MCF 10A (cell line): ENCODE measurements at regions of chr20 and their contacts with region 1.

Region 1: DNA sequence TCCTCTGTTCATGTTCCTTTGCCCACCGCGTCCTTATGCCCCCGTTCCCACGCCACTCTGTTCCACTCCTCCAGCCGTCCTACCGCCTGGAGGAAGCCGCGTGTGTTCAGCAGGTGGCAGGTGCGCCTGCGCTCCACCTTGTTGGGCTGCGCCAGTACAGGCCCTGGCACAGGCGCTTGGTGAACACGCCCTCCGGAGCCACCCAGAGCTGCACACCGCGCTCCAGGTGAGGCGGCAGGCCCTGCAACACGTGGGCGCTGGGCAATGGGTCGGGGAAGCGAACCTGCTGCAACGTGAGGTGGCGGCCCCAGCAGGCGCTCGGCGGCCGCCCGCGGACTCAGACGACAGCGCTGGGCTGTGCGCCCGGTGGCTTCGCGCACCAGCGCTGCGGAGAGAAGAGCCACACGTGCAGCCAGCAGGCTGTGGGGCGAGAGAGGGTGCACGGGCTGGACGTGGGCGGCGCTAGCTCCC is 4.1 kb upstream of the FOXS1 start:
- DNase-seq: no peak
- H3K4me3 Mint-ChIP-seq: no peak overlapping the region
- H3K27ac Mint-ChIP-seq: no peak overlapping the region
- H3K4me1 Mint-ChIP-seq: no peaks in the 10 kb centered on the region
- H3K27me3 Mint-ChIP-seq: peaks cover 33% of the 10 kb centered on the region
- CTCF ChIP-seq: no peak

Region 2: DNA sequence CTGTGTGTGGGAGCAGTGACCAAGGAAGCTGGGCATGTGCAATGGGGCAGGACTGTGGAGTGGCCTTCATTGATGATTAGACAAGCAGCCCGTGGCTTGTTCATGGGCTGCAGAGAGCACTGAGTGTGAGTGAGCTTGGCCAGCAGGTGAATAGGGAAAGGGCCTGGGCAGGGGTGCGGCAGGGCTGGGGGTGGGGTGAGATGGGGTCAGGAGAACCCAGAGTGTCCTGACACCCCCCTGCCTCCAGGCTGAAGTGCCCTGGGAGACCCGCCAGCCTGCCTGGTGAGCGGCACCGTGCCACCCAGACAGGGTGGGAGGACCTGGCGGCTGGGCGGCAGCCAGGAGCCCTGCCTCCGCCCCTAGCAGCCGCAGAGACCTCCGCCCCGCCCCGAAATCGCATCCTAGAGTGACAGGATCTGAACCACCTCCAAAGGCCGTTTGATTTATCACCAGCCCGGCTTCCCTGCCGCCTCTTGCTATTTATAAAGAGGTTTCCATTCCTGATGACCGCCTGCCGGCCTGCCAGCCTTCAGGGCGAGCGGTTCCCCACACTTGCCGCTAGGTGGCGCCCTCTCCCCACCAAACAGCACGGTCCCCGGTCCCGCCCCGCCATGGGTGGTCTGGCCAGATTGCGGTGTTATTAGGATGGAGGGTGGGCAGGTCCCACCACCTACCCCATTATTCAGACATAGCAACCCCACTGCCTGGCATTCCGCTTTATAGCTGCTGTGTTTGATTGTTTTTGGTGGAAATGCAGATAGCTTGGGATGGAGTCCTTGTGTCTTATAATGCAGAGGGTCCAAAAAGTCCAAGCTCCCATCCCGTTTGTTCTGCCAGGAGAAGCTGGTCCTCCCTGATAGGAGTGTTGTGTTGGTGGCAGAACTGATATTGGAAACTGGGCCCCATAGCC is 26.8 kb before region 1 on chr20:
- CTCF ChIA-PET with region 1: interaction called, 34 read pairs
- POLR2A ChIA-PET with region 1: no interaction called
- intact Hi-C with region 1: loop called (anchors 1 kb)
- DNase-seq: peak; percentile 70
- H3K4me3 Mint-ChIP-seq: no peak overlapping the region
- H3K27ac Mint-ChIP-seq: no peak overlapping the region
- H3K4me1 Mint-ChIP-seq: no peaks in the 10 kb centered on the region
- H3K27me3 Mint-ChIP-seq: no peaks in the 10 kb centered on the region
- CTCF ChIP-seq: peak; percentile 99

Region 3: DNA sequence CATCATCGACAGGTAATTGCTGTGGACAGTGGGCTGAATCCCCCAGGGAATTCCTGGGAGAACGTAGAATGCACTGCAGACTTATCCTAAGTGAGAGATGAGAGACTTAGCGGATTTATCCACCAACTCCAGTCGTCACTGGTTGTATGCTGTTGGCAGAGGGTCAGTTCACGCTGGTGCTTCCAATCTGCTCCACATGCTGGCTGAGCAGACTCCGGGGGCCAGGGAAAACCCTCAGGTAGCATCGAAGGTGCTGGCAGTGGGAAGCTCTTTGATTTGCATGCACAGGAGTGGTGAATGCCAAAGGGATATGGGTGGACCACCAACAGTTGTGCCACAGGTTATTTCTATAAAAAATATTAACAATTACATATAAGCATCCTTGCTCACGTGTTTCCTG is 41.2 kb after region 1 on chr20:
- CTCF ChIA-PET with region 1: interaction called, 13 read pairs
- POLR2A ChIA-PET with region 1: no interaction called
- intact Hi-C with region 1: no loop called
- DNase-seq: no peak
- H3K4me3 Mint-ChIP-seq: no peak overlapping the region
- H3K27ac Mint-ChIP-seq: no peak overlapping the region
- H3K4me1 Mint-ChIP-seq: peaks cover 5% of the 10 kb centered on the region
- H3K27me3 Mint-ChIP-seq: peaks cover 66% of the 10 kb centered on the region
- CTCF ChIP-seq: no peak

Region 4: DNA sequence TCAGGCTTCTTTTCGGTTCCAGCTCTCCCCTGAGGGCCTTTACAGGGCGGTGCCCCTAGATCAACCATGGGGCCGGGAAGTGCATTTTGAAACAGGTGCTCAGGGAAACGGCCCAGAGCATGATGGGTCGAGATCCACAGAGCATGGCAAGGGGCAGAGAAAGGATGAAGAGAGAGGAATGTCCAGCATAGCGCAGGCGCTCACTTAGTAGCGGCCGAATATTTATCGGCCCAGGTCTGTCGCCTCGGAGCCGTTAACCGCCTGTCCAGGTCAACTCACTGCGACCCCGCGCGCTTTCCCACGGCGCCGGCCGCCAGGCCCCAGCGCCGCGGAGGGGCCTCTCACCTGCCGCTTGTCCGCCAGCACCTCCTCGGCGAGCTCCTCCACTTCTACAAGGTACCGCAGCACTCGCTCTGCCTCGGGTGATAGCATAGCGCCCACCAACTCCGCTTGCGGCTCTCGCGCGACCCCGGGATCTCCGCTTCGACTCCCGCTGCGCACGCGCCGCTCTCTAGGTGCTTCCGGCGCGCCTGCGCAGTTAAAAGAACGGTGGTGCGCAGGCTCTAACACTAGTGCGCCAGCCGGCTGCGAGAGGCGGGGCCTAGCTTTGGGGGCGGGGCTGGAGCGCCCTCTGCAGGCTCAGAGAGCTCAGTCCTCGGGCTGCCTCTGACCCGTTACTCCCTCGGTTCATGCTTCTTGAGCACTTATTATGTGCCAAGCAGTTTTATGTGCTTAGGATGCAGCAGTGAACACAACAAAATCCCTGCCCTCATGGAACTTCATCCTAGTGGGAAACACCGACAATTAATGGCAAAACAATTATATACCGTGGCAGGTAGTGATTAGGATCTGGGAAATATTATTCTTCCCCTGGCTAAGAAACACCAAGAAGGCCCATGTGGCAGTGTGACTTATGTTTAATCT is 102.3 kb after region 1 on chr20 and contains the start of gene PDRG1:
- CTCF ChIA-PET with region 1: interaction called, 200 read pairs
- POLR2A ChIA-PET with region 1: interaction called, 6 read pairs
- intact Hi-C with region 1: loop called (anchors 1 kb)
- DNase-seq: peak; percentile 97
- H3K4me3 Mint-ChIP-seq: peak within 1 kb of the TSS; percentile 81
- H3K27ac Mint-ChIP-seq: peak within 1 kb of the TSS; percentile 91
- H3K4me1 Mint-ChIP-seq: peaks cover 13% of the 10 kb centered on the region
- H3K27me3 Mint-ChIP-seq: peaks cover 29% of the 10 kb centered on the region
- CTCF ChIP-seq: peak; percentile 71
- total RNA-seq, gene PDRG1: 12.2 and 16.3 TPM in 2 replicates

Region 5: GRCh38 chr20:31974951-31975487 is 125.5 kb after region 1 on chr20:
- CTCF ChIA-PET with region 1: interaction called, 14 read pairs
- POLR2A ChIA-PET with region 1: no interaction called
- intact Hi-C with region 1: no loop called
- DNase-seq: no peak
- H3K4me3 Mint-ChIP-seq: no peak overlapping the region
- H3K27ac Mint-ChIP-seq: no peak overlapping the region
- H3K4me1 Mint-ChIP-seq: no peaks in the 10 kb centered on the region
- H3K27me3 Mint-ChIP-seq: peaks cover 73% of the 10 kb centered on the region
- CTCF ChIP-seq: no peak